ENCODE measurements at regions of chr9 and their contacts with region 1.

Region 1: GRCh38 chr9:37800631-37801286 is at the start of gene DCAF10:
- DNase-seq: peak; percentile 80 to 97 (median 87)
- ATAC-seq: peak; percentile 95
- H3K4me3 ChIP-seq: peak within 1 kb of the TSS; percentile 97
- H3K4me3 Mint-ChIP-seq: peak within 1 kb of the TSS; percentile 86 to 95 (median 93)
- H3K27ac ChIP-seq: peak within 1 kb of the TSS; percentile 69
- H3K27ac Mint-ChIP-seq: peak within 1 kb of the TSS; percentile 71 to 95 (median 90)
- H3K4me1 ChIP-seq: peaks cover 19 to 26% of the 10 kb centered on the region in 2 donors
- H3K4me1 Mint-ChIP-seq: peaks cover 24 to 55% (median 42%) of the 10 kb centered on the region in 7 donors
- H3K27me3 ChIP-seq: no peaks in the 10 kb centered on the region
- H3K27me3 Mint-ChIP-seq: no peaks in the 10 kb centered on the region
- total RNA-seq, gene DCAF10: 12.1 to 22.5 (median 21.3) TPM

Region 2: DNA sequence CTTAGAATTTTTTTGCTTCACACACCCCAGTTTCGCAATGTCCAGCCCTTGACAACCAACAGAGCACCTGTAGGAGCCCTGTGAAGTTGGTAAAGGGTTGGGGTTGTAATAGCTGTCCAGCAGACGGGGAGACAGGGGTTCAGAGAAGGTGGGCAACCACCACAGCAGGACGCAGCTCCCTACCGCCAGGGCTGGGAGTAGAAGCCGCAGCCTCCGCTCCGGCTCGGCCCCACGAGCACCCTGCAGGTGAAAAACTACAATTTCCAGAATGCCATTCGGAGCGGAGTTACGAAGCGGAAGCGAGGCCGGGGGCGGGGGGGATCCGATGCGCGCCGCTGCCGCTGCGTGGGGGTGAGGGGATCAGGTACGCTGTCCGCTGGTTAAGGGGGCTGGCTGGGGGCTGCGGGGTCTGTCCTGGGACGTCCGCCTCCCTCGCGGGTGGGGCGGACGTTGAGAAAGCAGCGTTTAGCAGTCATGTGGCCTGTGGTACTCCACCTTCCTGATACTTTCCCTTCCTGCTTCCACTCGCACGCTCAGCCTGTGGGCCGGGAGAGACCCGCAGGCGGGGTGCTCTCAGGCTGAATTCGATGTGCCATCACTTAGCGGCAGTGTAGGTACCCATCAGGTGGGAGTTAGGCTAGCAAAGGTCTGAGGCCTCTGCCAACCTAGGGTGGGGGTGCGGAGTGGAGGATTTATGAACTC is 47.1 kb before region 1 on chr9 and contains the start of gene TRMT10B:
- CTCF ChIA-PET with region 1: interaction called, 3 read pairs
- POLR2A ChIA-PET with region 1: interaction called, 3 read pairs
- intact Hi-C with region 1: loop called (anchors 1 kb)
- DNase-seq: peak; percentile 50 to 78 (median 70)
- ATAC-seq: peak; percentile 95
- H3K4me3 ChIP-seq: peak within 1 kb of the TSS; percentile 92
- H3K4me3 Mint-ChIP-seq: peak within 1 kb of the TSS; percentile 87 to 98 (median 96)
- H3K27ac ChIP-seq: peak within 1 kb of the TSS; percentile 87
- H3K27ac Mint-ChIP-seq: peak within 1 kb of the TSS; percentile 68 to 95 (median 92)
- H3K4me1 ChIP-seq: peaks cover 9 to 11% of the 10 kb centered on the region in 2 donors
- H3K4me1 Mint-ChIP-seq: peaks cover 26 to 52% (median 33%) of the 10 kb centered on the region in 7 donors
- H3K27me3 ChIP-seq: no peaks in the 10 kb centered on the region
- H3K27me3 Mint-ChIP-seq: no peaks in the 10 kb centered on the region
- total RNA-seq, gene TRMT10B: 16.0 to 28.9 (median 18.5) TPM

Region 3: GRCh38 chr9:37775216-37775919 is 25.4 kb before region 1 on chr9:
- CTCF ChIA-PET with region 1: no interaction called
- POLR2A ChIA-PET with region 1: interaction called, 13 read pairs
- intact Hi-C with region 1: no loop called
- DNase-seq: no peak
- ATAC-seq: no peak
- H3K4me3 ChIP-seq: no peak overlapping the region
- H3K4me3 Mint-ChIP-seq: no peak overlapping the region
- H3K27ac ChIP-seq: no peak overlapping the region
- H3K27ac Mint-ChIP-seq: peak overlapping the region in 3 of 9 donors; percentile 1 to 78 (median 43)
- H3K4me1 ChIP-seq: no peaks in the 10 kb centered on the region
- H3K4me1 Mint-ChIP-seq: peaks cover 0 to 5% (median 4%) of the 10 kb centered on the region in 7 donors
- H3K27me3 ChIP-seq: no peaks in the 10 kb centered on the region
- H3K27me3 Mint-ChIP-seq: no peaks in the 10 kb centered on the region

Region 4: GRCh38 chr9:37784616-37785483 is 15.9 kb before region 1 on chr9 and contains the start of gene EXOSC3:
- CTCF ChIA-PET with region 1: no interaction called
- POLR2A ChIA-PET with region 1: interaction called, 29 read pairs
- intact Hi-C with region 1: loop called (anchors 1 kb)
- DNase-seq: peak; percentile 66 to 85 (median 81)
- ATAC-seq: peak; percentile 92
- H3K4me3 ChIP-seq: peak within 1 kb of the TSS; percentile 92
- H3K4me3 Mint-ChIP-seq: peak within 1 kb of the TSS; percentile 96 to 98 (median 97)
- H3K27ac ChIP-seq: peak within 1 kb of the TSS; percentile 85
- H3K27ac Mint-ChIP-seq: peak within 1 kb of the TSS; percentile 95 to 98 (median 96)
- H3K4me1 ChIP-seq: peaks cover 18 to 21% of the 10 kb centered on the region in 2 donors
- H3K4me1 Mint-ChIP-seq: peaks cover 18 to 50% (median 40%) of the 10 kb centered on the region in 7 donors
- H3K27me3 ChIP-seq: no peaks in the 10 kb centered on the region
- H3K27me3 Mint-ChIP-seq: peaks cover 0 to 4% (median 0%) of the 10 kb centered on the region in 5 donors
- total RNA-seq, gene EXOSC3: 27.8 to 66.1 (median 60.7) TPM

Region 5: GRCh38 chr9:37859043-37859442 is 58.3 kb after region 1 on chr9:
- CTCF ChIA-PET with region 1: no interaction called
- POLR2A ChIA-PET with region 1: no interaction called
- intact Hi-C with region 1: loop called in 1 of 2 experiments (anchors 10 kb)
- DNase-seq: no peak
- ATAC-seq: no peak
- H3K4me3 ChIP-seq: no peak overlapping the region
- H3K4me3 Mint-ChIP-seq: no peak overlapping the region
- H3K27ac ChIP-seq: no peak overlapping the region
- H3K27ac Mint-ChIP-seq: peak overlapping the region in 1 of 9 donors; percentile 16
- H3K4me1 ChIP-seq: no peaks in the 10 kb centered on the region
- H3K4me1 Mint-ChIP-seq: peaks cover 0 to 5% (median 0%) of the 10 kb centered on the region in 7 donors
- H3K27me3 ChIP-seq: no peaks in the 10 kb centered on the region
- H3K27me3 Mint-ChIP-seq: no peaks in the 10 kb centered on the region

Region 6: GRCh38 chr9:38243993-38244392 is 443.2 kb after region 1 on chr9:
- CTCF ChIA-PET with region 1: no interaction called
- POLR2A ChIA-PET with region 1: no interaction called
- intact Hi-C with region 1: no loop called
- DNase-seq: no peak
- ATAC-seq: no peak
- H3K4me3 ChIP-seq: no peak overlapping the region
- H3K4me3 Mint-ChIP-seq: no peak overlapping the region
- H3K27ac ChIP-seq: no peak overlapping the region
- H3K27ac Mint-ChIP-seq: peak overlapping the region in 1 of 9 donors; percentile 36
- H3K4me1 ChIP-seq: no peaks in the 10 kb centered on the region
- H3K4me1 Mint-ChIP-seq: no peaks in the 10 kb centered on the region
- H3K27me3 ChIP-seq: no peaks in the 10 kb centered on the region
- H3K27me3 Mint-ChIP-seq: no peaks in the 10 kb centered on the region